BJ (cell line): ENCODE measurements at regions of chr17 and their contacts with region 1.

Region 1: GRCh38 chr17:59753522-59754467 is 46.3 kb downstream of the VMP1 start:
- DNase-seq: peak; percentile 66
- H3K4me3 ChIP-seq: 0 out of 2 replicates have a peak overlapping the region, but pooled peaks have one; percentile 13
- H3K27me3 ChIP-seq: no peaks in the 10 kb centered on the region
- CTCF ChIP-seq: peak; percentile 54

Region 2: DNA sequence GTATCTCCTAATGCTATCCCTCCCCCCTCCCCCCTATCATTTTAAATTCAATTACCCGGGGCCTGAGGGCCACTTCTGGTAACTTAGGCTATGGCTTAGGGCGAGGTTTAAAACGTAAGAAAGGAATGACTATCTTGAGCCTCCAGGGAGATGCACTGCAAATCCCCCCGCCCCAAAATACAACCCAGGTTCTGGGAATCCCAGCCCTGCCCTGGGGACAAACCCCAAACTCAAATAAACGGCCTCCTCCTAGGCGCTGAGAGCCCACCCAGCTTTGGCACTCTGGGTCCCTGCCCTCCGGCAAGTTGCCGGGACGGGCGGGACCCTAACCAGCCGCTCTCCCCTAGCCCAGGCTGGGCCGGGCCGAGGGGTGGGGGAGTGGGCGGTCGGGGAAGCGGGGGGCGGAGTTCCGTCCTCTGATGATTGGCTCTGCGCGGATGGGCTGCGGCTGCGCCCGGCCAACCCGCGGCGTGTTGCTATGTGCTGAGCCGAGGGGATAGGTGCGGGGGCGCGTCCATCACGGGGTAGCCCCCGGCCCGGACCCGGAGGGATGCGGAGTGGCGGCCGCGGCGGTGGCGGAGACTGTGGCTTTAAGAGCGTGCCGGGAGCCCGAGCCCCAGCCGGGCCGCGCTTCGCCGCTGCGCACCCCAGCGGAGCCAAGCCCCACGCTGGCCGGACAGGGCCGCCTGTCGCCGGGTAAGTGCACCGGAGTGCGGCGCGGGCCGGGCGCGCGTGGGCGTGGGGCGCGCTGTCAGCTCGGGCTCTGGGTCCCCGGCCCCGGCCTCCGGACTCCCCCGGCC is 422.5 kb before region 1 on chr17 and contains the start of gene YPEL2:
- CTCF ChIA-PET with region 1: no interaction called
- POLR2A ChIA-PET with region 1: no interaction called
- DNase-seq: peak; percentile 40
- H3K4me3 ChIP-seq: peak within 1 kb of the TSS; percentile 94
- H3K27me3 ChIP-seq: peaks cover 6% of the 10 kb centered on the region
- CTCF ChIP-seq: no peak
- polyA plus RNA-seq, gene YPEL2: 8.4 and 9.2 TPM in 2 replicates

Region 3: DNA sequence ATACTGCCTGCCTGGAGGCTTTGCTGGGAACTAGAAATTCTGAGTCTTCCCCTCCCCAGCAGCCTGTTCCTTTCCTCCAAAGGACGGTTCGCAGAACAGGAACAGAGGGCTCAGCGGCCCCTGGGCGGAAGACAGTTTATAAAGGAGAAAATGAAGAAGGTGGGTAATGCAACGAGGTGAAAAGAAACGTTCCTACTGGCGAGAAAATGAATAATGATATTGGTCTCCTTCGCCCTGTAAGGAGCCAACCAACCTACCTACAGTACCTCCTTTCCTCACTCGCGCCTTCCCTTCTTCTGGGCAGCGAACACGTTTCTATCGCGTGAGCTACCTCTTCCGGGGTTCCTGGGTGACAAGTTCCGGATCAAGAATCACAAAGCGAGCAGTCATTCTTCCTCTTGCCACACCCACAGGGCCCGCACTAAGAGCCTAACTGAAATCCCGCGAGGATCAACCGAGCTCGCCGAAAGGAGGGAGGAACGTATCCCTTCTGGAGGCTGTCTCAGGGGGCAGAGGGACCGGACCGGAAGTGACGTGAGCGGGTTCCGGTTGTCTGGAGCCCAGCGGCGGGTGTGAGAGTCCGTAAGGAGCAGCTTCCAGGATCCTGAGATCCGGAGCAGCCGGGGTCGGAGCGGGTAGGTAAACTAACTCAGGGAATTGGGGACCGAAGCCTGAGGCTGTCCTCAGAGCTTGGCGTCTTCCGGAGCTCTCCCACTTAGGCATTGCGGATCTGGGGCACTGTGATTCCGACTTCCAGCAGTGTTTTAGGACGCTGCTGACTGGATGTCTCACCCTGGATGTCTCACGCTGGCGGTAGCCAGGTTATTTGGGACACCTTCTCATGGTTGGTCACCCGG is 46.5 kb before region 1 on chr17 and contains the starts of genes PTRH2 and VMP1:
- CTCF ChIA-PET with region 1: no interaction called
- POLR2A ChIA-PET with region 1: no interaction called
- DNase-seq: peak; percentile 99
- H3K4me3 ChIP-seq: peak within 1 kb of the TSS; percentile 62
- H3K27me3 ChIP-seq: no peaks in the 10 kb centered on the region
- CTCF ChIP-seq: no peak
- polyA plus RNA-seq, gene PTRH2: 31.4 and 42.4 TPM in 2 replicates
- polyA plus RNA-seq, gene VMP1: 105 and 186 TPM in 2 replicates

Region 4: DNA sequence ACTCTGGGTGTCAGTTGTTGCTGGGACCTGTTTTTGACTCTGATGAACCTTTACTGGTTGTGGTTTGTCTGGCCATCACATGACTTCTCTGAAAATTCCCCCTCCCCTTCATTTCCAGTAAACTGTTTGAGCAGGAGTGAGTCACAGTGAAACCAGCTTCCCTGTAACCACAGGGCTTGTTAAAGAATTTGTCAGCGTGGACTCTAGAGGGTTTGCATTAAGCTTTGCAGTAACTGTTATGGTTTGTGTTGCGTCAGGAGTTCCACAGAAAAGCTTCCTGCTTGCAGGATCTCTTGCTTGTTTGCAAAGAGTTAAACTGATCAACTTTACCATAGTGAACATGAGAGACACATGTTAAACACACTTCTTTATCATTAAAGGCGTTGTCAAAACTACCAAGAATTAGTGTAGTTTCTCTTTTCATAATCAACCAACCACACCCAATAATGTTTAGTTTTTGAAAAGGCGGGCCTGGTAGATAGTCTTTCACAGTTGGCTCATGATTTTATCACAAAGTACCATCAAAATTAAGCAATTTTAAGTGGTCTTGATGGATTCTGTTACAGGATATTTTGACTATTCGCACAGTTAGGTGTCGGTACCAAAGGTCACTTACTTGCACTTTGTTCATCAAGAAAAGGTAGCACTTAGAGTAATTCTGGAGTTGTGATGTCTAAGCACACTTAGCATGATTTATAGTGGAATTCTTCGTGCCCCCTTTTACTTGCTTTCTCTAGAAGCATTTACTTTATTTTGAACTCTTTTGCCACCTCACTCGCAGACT is 32.9 kb after region 1 on chr17:
- CTCF ChIA-PET with region 1: interaction called, 21 read pairs
- POLR2A ChIA-PET with region 1: no interaction called
- DNase-seq: peak; percentile 99
- H3K4me3 ChIP-seq: no peak overlapping the region
- H3K27me3 ChIP-seq: no peaks in the 10 kb centered on the region
- CTCF ChIP-seq: 0 out of 2 replicates have a peak, but pooled peaks have one; percentile 7

Region 5: DNA sequence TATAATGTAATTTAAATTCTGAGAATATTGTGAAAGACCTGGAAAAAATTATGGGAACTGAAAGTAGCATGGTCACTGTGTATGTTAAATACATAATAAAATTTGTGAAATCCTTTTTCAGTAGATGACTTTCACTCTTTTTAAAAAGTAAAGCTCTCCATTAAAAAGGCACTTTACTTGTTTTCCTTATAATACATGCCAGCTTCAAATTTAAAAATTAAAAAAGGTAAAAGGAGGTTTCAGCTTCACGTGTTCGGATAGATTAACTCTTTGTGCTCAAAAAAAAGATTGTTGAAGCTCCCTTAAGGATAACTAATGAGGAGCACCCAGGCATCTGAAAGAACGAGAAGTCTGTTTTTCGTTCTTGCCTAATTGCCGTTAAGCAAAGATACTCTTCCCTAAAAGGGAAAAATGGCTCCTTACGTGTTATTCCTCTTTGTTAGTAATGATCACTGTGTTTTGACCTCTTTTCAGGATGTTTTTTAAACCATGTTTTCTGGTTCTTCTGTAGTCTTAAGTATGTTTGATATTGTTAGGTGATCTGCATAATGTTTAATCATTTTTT is 51.2 kb after region 1 on chr17:
- CTCF ChIA-PET with region 1: no interaction called
- POLR2A ChIA-PET with region 1: interaction called, 13 read pairs
- DNase-seq: no peak
- H3K4me3 ChIP-seq: no peak overlapping the region
- H3K27me3 ChIP-seq: no peaks in the 10 kb centered on the region
- CTCF ChIP-seq: no peak